ENCODE measurements at regions of chr2 and their contacts with region 1.

Region 1: GRCh38 chr2:238169708-238170251 is 11.0 kb downstream of the ERFE start:
- H3K4me3 ChIP-seq: no peak overlapping the region
- H3K27ac ChIP-seq: peak overlapping the region; percentile 72
- H3K4me1 ChIP-seq: 0 out of 2 replicates have a peak, but pooled peaks cover 8% of the 10 kb centered on the region
- CTCF ChIP-seq: no peak

Region 2: DNA sequence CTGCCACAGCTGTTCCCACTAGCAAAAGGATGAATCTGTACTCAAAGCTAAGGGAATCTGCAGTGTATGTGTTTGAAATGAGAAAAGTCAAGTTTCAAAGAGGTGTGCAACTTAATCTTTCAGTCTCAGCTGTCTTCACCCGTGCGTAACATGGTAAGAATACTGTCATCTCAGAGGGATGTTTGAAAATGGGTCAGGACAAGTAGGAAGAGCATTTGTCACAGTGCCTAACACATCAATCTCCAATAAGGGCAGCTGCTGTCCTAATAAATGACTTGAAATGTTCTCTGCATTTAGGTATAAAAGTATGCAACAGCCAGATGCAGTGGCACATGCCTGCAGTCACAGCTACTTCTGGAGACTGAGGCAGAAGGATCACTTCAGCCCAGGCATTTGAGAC is 20.7 kb after region 1 on chr2:
- CTCF ChIA-PET with region 1: no interaction called
- POLR2A ChIA-PET with region 1: interaction called, 15 read pairs
- H3K4me3 ChIP-seq: no peak overlapping the region
- H3K27ac ChIP-seq: no peak overlapping the region
- H3K4me1 ChIP-seq: 0 out of 2 replicates have a peak, but pooled peaks cover 2% of the 10 kb centered on the region
- CTCF ChIP-seq: no peak

Measured in HEK293 (cell line).